ENCODE measurements at regions of chr16 and their contacts with region 1.

Region 1: DNA sequence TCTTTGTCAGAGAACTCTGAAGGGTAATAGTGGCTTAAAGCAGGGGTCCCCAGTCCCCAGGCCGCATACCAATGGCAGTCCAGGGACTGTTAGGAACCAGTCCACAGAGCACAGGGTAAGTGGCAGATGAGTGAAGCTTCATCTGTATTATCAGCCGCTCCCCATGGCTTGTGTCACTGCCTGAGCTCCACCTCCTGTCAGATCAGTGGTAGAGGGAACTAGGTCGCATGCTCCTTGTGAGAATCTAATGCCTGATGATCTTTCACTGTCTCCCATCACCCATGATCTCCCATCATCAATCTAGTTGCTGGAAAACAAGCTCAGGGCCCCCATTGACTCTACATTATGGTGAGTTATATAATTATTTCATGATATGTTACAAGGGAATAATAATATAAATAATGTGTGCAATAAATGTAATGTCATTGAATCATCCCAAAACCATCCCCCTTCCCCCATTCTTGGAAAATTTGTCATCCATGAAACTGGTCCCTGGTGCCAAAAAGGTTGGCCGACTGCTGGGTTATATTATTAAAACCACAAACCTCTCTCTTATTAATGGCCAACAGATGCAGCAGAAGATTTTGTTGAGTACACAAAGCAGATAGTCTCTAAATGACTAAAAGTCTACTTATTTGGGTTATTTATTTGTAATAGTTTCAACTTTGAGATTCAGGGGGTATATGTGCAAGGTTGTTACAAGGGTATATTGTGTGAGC is 782.7 kb downstream of the CDH11 start:
- DNase-seq: peak; percentile 20
- H3K4me3 ChIP-seq: no peak overlapping the region
- CTCF ChIP-seq: no peak

Region 2: GRCh38 chr16:64375391-64375980 is 36.3 kb after region 1 on chr16:
- in situ Hi-C with region 1: loop called (anchors 5 kb)
- DNase-seq: no peak
- H3K4me3 ChIP-seq: no peak overlapping the region
- CTCF ChIP-seq: no peak

Region 3: GRCh38 chr16:64469906-64470702 is 130.9 kb after region 1 on chr16:
- in situ Hi-C with region 1: no loop called
- DNase-seq: no peak
- H3K4me3 ChIP-seq: no peak overlapping the region
- CTCF ChIP-seq: peak; percentile 11